Ovary (tissue), 10 donors: ENCODE measurements at regions of chr7 and their contacts with region 1.

Region 1: GRCh38 chr7:92447345-92448204 is at the start of gene GATAD1:
- DNase-seq: peak; percentile 92 to 94 (median 93)
- H3K4me3 ChIP-seq: peak within 1 kb of the TSS; percentile 98
- H3K27ac ChIP-seq: peak within 1 kb of the TSS; percentile 80 to 95
- H3K4me1 ChIP-seq: peaks cover 1% of the 10 kb centered on the region
- H3K27me3 ChIP-seq: no peaks in the 10 kb centered on the region
- CTCF ChIP-seq: peak in 2 of 3 donors; percentile 91 to 93
- EP300 ChIP-seq: no peak
- POLR2A ChIP-seq: peak; percentile 70
- total RNA-seq, gene GATAD1: 30.8 to 59.1 (median 40.7) TPM

Region 2: GRCh38 chr7:91880413-91881241 is 566.9 kb before region 1 on chr7 and contains the start of gene MTERF1:
- intact Hi-C with region 1: loop called in 1 of 4 experiments (anchors 5 kb)
- DNase-seq: peak; percentile 90 to 96 (median 93)
- H3K4me3 ChIP-seq: peak within 1 kb of the TSS; percentile 61
- H3K27ac ChIP-seq: peak within 1 kb of the TSS in 1 of 2 donors; percentile 26
- H3K4me1 ChIP-seq: peaks cover 3% of the 10 kb centered on the region
- H3K27me3 ChIP-seq: no peaks in the 10 kb centered on the region
- CTCF ChIP-seq: peak; percentile 95 to 99 (median 96)
- EP300 ChIP-seq: no peak
- POLR2A ChIP-seq: no peak
- total RNA-seq, gene MTERF1: 2.8 to 17.8 (median 9.9) TPM

Region 3: DNA sequence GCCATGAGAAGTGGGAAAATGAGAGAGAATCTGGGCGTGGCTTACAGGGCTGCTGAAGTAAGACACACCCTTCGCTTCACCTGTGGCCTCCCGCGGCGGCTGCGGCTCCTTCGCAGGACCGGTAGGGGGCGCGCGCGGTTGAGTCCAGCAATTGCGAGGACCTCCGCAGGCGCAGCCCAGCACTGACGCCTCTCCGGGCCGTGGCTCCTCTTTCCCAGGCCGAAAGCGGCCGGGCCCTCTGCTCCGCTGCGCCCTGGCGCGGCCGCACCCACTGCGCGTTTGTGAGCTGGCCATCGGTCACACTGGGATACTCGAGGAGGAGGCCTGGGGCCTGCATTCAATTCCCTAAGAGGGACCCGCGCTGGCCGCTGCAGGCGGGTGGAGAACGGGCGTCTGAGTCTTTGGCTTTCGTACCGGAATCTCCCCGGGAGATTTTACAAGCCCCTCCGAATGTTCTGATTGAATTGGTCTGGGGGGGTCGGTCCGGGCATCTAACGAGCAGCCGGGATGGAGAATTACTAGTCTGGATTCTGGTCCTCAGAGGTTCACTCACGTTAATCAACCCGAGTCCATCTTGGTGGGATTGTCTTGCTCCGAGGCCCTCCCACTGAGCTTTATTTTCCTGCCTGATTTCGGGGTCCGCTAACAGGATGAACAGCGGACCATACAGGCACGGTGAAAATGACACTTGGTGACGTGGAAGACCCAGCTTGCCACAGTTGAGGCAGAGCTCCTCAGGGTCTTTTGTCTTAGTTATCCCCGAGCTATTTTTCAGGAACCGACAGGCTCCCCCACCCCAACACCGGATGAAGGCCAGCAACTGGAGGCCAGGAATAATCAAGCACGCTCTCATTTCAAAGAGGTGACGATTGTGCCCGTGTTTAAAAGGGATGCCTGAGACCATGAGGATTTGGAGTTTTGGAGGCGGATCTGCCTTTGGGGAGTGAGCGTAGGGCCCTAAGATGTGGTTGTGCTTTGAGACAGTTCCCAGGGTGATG is 268.3 kb before region 1 on chr7 and contains the start of gene LRRD1:
- intact Hi-C with region 1: loop called in 1 of 4 experiments (anchors 5 kb)
- DNase-seq: peak; percentile 79 to 93 (median 85)
- H3K4me3 ChIP-seq: peak within 1 kb of the TSS; percentile 51
- H3K27ac ChIP-seq: peak within 1 kb of the TSS; percentile 49 to 80
- H3K4me1 ChIP-seq: no peaks in the 10 kb centered on the region
- H3K27me3 ChIP-seq: no peaks in the 10 kb centered on the region
- CTCF ChIP-seq: peak; percentile 88 to 93 (median 92)
- EP300 ChIP-seq: no peak
- POLR2A ChIP-seq: no peak
- total RNA-seq, gene LRRD1: 0.11 to 0.60 (median 0.50) TPM in 4 of 7 donors, not detected in the others

Region 4: DNA sequence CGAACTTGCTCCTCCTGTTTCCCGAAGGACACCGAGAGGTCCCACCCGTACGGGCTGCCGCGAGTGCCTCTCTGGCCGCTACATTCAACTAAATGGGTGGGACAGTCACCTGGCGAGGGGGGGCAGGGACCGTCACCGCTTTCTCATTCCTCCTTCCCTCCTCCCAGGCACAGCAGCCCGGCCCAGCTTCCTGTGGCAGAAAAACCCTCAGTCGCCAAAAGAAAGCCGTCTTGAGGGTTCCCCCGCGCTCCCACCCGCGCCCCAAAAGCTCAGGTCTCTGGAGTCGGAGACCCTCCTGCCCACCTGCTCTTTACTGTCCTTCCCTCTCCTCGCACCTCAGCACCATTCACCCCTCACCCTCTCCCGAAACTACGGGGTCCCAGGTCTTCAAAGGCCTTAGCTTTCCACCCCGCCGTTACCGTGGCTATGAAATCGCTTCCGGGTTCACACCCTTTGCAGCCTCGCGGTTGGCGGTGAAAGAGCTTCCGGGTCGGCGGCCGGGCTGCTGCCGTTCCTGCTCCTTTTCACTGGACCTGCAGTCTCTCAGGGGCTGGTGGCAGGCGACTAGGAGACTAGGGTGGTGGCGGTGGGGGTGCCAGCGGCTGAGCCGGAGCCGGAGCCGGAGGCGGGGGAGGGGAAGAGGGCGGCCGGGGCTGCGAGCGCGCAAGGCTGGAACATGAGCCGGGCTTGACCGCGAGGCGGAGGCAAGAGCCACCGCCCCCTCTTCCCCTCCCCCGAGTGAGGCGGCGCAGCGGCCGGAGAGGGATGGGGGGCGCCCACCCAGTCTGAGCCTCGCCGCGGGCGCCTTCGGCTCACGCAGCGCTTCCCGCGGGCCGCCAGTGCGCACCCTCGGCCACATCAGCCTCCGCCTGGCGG is 201.8 kb before region 1 on chr7 and contains the starts of genes ANKIB1 and KRIT1:
- intact Hi-C with region 1: loop called in 1 of 4 experiments (anchors 10 kb)
- DNase-seq: peak; percentile 83 to 90 (median 86)
- H3K4me3 ChIP-seq: peak within 1 kb of the TSS; percentile 91
- H3K27ac ChIP-seq: peak within 1 kb of the TSS; percentile 80 to 81
- H3K4me1 ChIP-seq: peaks cover 3% of the 10 kb centered on the region
- H3K27me3 ChIP-seq: no peaks in the 10 kb centered on the region
- CTCF ChIP-seq: peak in 1 of 3 donors; percentile 27
- EP300 ChIP-seq: no peak
- POLR2A ChIP-seq: peak; percentile 72
- total RNA-seq, gene ANKIB1: 30.8 to 83.1 (median 61.4) TPM
- total RNA-seq, gene KRIT1: 46.8 to 65.0 (median 53.1) TPM